Activated T-helper 1 cell treated with anti-CD3 and anti-CD28 coated beads, Interleukin-12 subunit alpha, Interleukin-12 subunit beta, Interleukin-2, Interleukin-4 antibody, amounts not matched to agents 30 ng/mL and 10 ng/mL and 1 ng/mL, durations not matched to agents 14 hours and 24 hours and 36 hours (primary cell): ENCODE measurements at regions of chr5 and their contacts with region 1.

Region 1: DNA sequence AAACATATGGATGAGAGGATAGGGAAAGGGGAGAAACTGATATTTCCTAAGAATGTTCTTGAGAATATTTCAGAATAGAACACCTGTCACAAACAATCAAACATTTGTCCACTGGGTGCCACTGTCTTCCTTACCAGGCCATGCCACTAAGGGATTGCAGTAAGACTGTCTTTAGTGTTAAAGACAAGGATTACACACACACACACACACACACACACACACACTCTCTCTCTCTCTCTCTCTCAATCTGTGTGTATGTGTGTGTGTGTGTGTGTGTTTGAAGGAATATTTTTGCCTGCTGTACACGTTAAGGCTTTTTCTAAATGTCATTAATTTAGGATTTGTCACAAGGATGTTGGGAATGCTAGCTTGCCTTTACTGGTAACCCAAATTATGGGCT is 54.4 kb downstream of the CCDC192 start:
- DNase-seq: no peak
- H3K4me3 Mint-ChIP-seq: no peak overlapping the region
- H3K27ac Mint-ChIP-seq: no peak overlapping the region
- H3K4me1 Mint-ChIP-seq: no peaks in the 10 kb centered on the region
- H3K27me3 Mint-ChIP-seq: peaks cover 3% of the 10 kb centered on the region

Region 2: DNA sequence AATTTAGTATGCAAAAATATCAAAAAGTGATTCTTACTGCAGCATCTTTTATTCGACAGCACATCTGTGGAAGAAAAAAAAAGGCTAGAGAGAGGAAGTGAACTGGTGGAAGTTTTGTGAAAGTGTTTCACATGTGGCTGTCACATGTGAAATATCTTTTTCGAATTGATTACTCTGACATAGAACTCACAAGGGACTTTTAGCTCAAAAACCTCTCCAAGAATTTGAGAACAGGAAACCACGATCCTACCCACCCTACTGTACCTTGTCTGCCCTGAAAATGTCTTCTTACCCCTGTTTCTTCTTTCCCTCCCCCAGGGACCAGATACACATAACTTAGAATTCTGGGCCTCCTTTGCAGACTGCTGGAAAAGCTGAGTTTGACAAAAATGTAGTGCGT is 346.6 kb before region 1 on chr5:
- intact Hi-C with region 1: no loop called
- DNase-seq: no peak
- H3K4me3 Mint-ChIP-seq: no peak overlapping the region
- H3K27ac Mint-ChIP-seq: no peak overlapping the region
- H3K4me1 Mint-ChIP-seq: peaks cover 15% of the 10 kb centered on the region
- H3K27me3 Mint-ChIP-seq: peaks cover 6% of the 10 kb centered on the region

Region 3: DNA sequence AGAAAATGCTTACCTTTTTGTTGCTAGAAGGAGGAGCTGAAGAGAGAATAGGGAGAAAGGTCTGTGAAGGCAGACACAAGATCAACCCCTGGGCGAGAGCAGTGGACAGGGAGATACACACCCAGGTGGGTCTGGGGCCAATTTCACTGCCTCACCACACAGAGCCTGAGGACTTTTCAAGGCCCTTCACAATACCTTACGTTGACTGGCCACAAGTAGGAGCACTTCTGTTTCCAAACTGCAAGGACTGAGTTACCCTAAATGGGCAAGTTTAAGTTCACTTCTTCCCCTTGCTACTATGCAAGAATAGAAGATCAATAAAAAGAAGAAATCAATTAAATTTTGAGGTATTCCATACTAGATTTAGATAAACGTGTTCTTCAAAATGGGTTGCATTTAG is 151.5 kb after region 1 on chr5:
- intact Hi-C with region 1: loop called (anchors 5 kb)
- DNase-seq: no peak
- H3K4me3 Mint-ChIP-seq: no peak overlapping the region
- H3K27ac Mint-ChIP-seq: no peak overlapping the region
- H3K4me1 Mint-ChIP-seq: peaks cover 10% of the 10 kb centered on the region
- H3K27me3 Mint-ChIP-seq: peaks cover 13% of the 10 kb centered on the region